Heart right ventricle (tissue), 16 donors: ENCODE measurements at regions of chr12 and their contacts with region 1.

Region 1: DNA sequence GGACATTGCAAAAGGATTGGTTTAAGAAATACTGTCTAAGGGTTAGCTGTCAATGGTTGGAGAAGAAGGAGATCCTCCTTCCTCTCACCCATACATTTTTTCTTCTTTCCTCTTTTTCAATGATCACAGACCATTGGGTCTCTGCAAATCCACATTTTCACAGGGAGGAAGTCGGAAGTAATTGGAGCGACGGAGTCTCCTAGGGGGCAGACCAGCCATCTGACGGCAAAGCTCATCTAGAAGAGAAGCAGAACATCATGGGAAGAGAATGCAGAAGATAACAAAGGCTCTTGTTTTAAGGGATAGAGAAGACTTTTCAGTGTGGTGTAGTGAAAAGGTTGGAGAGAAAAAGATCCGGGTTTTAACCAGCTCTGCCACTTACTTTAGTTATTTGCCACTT is 14.7 kb downstream of the MFAP5 start:
- DNase-seq: no peak
- ATAC-seq: no peak
- H3K4me3 ChIP-seq: no peak overlapping the region
- H3K27ac ChIP-seq: no peak overlapping the region
- H3K4me1 ChIP-seq: no peaks in the 10 kb centered on the region
- H3K27me3 ChIP-seq: peaks cover 0 to 3% (median 0%) of the 10 kb centered on the region in 7 donors
- CTCF ChIP-seq: no peak

Region 2: GRCh38 chr12:8667270-8667669 is 19.3 kb after region 1 on chr12:
- intact Hi-C with region 1: loop called in 1 of 10 experiments (anchors 1 kb)
- DNase-seq: no peak
- ATAC-seq: no peak
- H3K4me3 ChIP-seq: no peak overlapping the region
- H3K27ac ChIP-seq: no peak overlapping the region
- H3K4me1 ChIP-seq: peaks cover 0 to 13% (median 0%) of the 10 kb centered on the region in 9 donors
- H3K27me3 ChIP-seq: no peaks in the 10 kb centered on the region
- CTCF ChIP-seq: no peak